Naive thymus-derived CD4-positive, alpha-beta T cell (primary cell): ENCODE measurements at regions of chrX and their contacts with region 1.

Region 1: DNA sequence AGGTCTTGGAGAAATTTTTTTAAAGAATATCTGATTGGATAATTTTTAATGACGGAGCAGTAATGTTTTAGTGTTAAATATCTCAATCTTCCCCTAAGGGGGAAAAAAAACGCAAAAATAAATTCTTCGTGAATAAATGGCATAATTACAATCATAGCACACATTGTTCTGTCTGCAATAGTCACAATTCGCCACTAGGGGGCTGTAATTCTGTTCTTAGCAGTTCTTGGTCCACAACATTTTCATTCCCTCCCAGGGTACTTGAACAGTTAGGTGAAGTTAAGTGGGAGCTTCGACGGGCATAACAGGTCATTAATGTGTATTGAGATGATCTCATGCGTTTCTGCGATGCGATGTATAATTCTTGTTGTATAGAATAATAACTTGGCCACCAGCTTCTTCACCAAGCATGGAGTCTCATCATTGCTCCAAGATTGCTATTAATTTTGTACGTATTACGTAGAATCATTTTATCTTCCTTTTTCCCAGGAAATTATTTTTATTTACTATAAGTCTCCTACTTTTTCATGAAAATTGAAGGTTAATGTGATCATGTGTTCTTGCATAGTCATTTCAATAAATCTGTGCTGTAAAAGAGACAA is 27.2 kb downstream of the HTR2C start:
- DNase-seq: peak in 5 of 9 donors; percentile 7 to 31 (median 28)
- ATAC-seq: no peak
- H3K4me3 ChIP-seq: no peak overlapping the region
- H3K4me3 Mint-ChIP-seq: no peak overlapping the region
- H3K27ac ChIP-seq: no peak overlapping the region
- H3K27ac Mint-ChIP-seq: no peak overlapping the region
- H3K4me1 ChIP-seq: no peaks in the 10 kb centered on the region
- H3K4me1 Mint-ChIP-seq: no peaks in the 10 kb centered on the region
- H3K27me3 ChIP-seq: no peaks in the 10 kb centered on the region
- H3K27me3 Mint-ChIP-seq: no peaks in the 10 kb centered on the region

Region 2: GRCh38 chrX:115147220-115147619 is 536.1 kb after region 1 on chrX:
- CTCF ChIA-PET with region 1: no interaction called
- POLR2A ChIA-PET with region 1: no interaction called
- intact Hi-C with region 1: loop called in 1 of 2 experiments (anchors 2 kb)
- DNase-seq: no peak
- ATAC-seq: no peak
- H3K4me3 ChIP-seq: no peak overlapping the region
- H3K4me3 Mint-ChIP-seq: no peak overlapping the region
- H3K27ac ChIP-seq: no peak overlapping the region
- H3K27ac Mint-ChIP-seq: no peak overlapping the region
- H3K4me1 ChIP-seq: no peaks in the 10 kb centered on the region
- H3K4me1 Mint-ChIP-seq: no peaks in the 10 kb centered on the region
- H3K27me3 ChIP-seq: no peaks in the 10 kb centered on the region
- H3K27me3 Mint-ChIP-seq: no peaks in the 10 kb centered on the region

Region 3: DNA sequence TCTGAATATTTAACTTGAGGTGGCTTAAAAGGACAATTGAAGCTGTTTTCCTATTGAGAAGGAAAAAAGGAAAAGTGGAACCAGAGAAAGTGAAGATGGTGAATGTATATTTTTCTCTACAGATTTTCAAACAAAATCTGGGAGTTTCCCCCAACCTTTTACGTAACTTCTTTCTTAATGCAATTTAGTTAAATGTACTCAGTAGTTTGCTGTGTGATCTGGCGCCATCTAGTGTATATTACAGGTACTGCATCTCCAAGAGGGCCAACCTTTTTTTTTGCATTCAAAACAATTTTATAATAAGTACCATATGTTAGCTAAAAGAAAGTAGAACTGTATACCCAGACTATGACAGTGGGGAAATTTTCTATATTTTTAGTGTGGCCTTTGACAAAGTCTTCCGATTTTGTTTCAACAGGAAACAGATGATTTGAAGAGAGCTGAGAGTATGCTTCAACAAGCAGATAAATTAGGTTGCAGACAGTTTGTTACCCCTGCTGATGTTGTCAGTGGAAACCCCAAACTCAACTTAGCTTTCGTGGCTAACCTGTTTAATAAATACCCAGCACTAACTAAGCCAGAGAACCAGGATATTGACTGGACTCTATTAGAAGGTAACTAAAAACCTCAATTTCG is 1031.9 kb after region 1 on chrX:
- CTCF ChIA-PET with region 1: no interaction called
- POLR2A ChIA-PET with region 1: no interaction called
- intact Hi-C with region 1: loop called in 1 of 2 experiments (anchors 5 kb)
- DNase-seq: peak in 8 of 9 donors; percentile 8 to 51 (median 30)
- ATAC-seq: peak; percentile 60
- H3K4me3 ChIP-seq: no peak overlapping the region
- H3K4me3 Mint-ChIP-seq: no peak overlapping the region
- H3K27ac ChIP-seq: no peak overlapping the region
- H3K27ac Mint-ChIP-seq: no peak overlapping the region
- H3K4me1 ChIP-seq: no peaks in the 10 kb centered on the region
- H3K4me1 Mint-ChIP-seq: no peaks in the 10 kb centered on the region
- H3K27me3 ChIP-seq: no peaks in the 10 kb centered on the region
- H3K27me3 Mint-ChIP-seq: peaks cover 0 to 4% (median 0%) of the 10 kb centered on the region in 5 donors